Activated CD4-positive, alpha-beta T cell treated with anti-CD3 and anti-CD28 coated beads for 36 hours (primary cell): ENCODE measurements at regions of chr1 and their contacts with region 1.

Region 1: GRCh38 chr1:181142096-181142958 is 53.8 kb downstream of the IER5 start:
- DNase-seq: peak; percentile 95
- ATAC-seq: peak; percentile 73
- H3K4me3 Mint-ChIP-seq: peak overlapping the region; percentile 33
- H3K27ac Mint-ChIP-seq: peak overlapping the region; percentile 85
- H3K4me1 Mint-ChIP-seq: peaks cover 46% of the 10 kb centered on the region
- H3K27me3 Mint-ChIP-seq: peaks cover 3% of the 10 kb centered on the region

Region 2: DNA sequence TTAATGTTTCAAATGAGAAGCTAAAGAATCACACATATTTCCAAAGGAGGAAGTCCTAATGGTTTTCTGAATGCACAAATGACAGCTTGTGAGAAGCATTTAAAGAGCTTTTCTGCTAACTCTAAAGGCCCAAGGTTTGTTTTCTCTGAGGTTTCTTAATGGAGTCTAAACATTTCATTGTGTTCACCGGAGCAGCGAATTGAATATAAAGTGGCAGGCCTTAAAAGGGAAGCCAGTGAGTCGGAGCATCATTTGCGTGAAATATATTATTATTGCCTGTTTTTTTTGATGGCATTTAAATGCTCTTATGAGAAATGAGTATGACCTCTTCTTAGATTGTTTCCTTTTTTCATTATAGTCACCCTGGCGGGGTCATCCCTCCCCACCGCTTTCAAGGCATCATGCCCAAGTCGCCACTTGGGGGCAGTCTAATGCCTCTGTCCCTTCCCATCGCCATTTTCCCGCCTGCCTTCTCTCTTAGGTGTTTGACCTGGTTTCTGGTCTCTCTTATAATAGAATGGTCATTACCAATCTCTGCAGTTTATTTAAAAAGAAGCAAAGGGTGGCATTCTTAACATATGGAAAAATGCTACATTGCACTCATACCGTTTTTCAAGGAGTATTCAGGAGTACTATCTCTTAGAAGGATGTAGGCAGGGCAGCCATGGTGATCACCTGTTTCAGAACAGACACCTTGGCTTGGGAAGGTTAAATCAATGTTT is 608.9 kb before region 1 on chr1:
- CTCF ChIA-PET with region 1: no interaction called
- POLR2A ChIA-PET with region 1: no interaction called
- intact Hi-C with region 1: loop called in 1 of 2 experiments (anchors 1 kb)
- DNase-seq: peak; percentile 86
- ATAC-seq: peak; percentile 81
- H3K4me3 Mint-ChIP-seq: no peak overlapping the region
- H3K27ac Mint-ChIP-seq: no peak overlapping the region
- H3K4me1 Mint-ChIP-seq: no peaks in the 10 kb centered on the region
- H3K27me3 Mint-ChIP-seq: peaks cover 4% of the 10 kb centered on the region

Region 3: GRCh38 chr1:180954005-180954800 is 188.1 kb before region 1 on chr1:
- CTCF ChIA-PET with region 1: interaction called, 3 read pairs
- POLR2A ChIA-PET with region 1: interaction called, 3 read pairs
- intact Hi-C with region 1: loop called in 1 of 2 experiments (anchors 10 kb)
- DNase-seq: peak; percentile 77
- ATAC-seq: peak; percentile 92
- H3K4me3 Mint-ChIP-seq: peak overlapping the region; percentile 33
- H3K27ac Mint-ChIP-seq: peak overlapping the region; percentile 31
- H3K4me1 Mint-ChIP-seq: peaks cover 9% of the 10 kb centered on the region
- H3K27me3 Mint-ChIP-seq: no peaks in the 10 kb centered on the region

Region 4: DNA sequence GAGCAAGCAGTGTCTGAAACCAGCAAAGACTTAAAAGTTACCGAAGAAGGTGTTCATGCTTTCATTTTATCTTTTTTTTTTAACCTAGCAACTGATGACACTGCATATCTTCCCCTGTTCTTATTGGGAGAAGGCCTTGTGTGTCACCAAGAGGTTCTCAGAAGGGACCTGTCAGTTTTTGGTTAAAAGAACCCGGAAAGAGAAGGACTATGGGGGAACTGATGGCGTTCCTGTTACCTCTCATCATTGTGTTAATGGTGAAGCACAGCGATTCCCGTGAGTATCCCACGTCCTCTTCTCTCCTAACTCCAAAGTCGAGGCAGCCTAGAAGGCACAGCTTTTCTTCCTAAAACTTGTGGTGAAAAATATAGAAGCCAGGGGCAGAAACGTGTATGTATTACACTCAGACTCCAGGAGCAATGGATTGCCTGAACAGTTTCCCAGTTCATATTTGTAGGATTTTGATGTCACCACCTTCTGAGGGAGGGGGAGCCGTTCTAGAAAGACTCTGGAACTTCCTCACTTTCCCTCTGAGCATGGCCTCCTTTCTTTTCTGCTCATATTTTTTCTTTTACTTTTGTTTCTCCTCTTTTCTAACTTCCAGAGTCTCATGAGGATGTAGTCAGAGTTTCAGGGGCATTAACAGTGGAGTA is 108.4 kb before region 1 on chr1 and contains the start of gene MR1:
- CTCF ChIA-PET with region 1: interaction called, 155 read pairs
- POLR2A ChIA-PET with region 1: interaction called, 3 read pairs
- intact Hi-C with region 1: loop called (anchors 1 kb)
- DNase-seq: peak; percentile 37
- ATAC-seq: peak; percentile 95
- H3K4me3 Mint-ChIP-seq: peak within 1 kb of the TSS; percentile 81
- H3K27ac Mint-ChIP-seq: peak within 1 kb of the TSS; percentile 100
- H3K4me1 Mint-ChIP-seq: peaks cover 55% of the 10 kb centered on the region
- H3K27me3 Mint-ChIP-seq: no peaks in the 10 kb centered on the region
- total RNA-seq, gene MR1: 21.5 to 25.3 TPM

Region 5: DNA sequence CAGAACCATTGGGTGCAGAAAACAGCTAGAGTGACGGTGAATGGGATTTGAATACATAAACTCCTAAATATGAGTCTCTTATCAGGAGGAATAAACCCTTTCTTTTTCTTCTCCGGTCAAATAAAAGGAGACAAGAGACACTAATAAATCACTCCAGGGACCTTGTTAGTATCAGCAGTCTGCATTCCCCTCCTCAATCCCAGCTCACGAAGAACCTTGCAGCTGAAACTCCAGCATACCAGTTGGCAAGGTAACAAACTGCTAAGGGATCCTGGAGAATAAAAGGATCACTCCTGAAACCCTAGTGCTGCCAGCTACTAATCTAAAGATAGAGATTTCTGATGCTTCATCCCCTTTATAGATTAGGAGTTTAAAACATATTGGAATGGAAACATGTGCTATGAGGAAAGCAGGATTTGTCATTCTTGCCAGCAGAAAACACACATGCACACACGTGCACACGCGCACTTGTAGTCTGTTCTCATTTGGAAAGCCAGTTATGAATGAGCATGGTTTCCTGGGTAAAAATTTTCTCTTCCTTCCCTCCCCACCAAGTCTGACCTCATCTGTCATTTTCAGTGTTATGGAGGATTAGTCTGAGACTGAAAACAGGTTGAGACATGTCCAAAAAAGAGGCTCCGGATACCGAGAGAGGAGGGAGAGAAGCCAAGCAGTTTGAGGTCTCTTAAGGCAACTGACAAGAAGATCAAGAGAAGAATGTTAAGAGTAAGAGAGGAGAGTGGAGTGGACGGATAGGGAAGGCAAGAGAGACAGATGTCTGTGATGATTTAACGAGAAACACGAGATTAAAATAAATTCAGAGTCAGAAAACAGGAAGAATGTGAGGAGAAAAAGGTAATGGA is 42.9 kb before region 1 on chr1:
- CTCF ChIA-PET with region 1: interaction called, 156 read pairs
- POLR2A ChIA-PET with region 1: interaction called, 15 read pairs
- intact Hi-C with region 1: loop called (anchors 1 kb)
- DNase-seq: peak; percentile 73
- ATAC-seq: peak; percentile 87
- H3K4me3 Mint-ChIP-seq: peak overlapping the region; percentile 56
- H3K27ac Mint-ChIP-seq: peak overlapping the region; percentile 94
- H3K4me1 Mint-ChIP-seq: peaks cover 77% of the 10 kb centered on the region
- H3K27me3 Mint-ChIP-seq: no peaks in the 10 kb centered on the region

Region 6: DNA sequence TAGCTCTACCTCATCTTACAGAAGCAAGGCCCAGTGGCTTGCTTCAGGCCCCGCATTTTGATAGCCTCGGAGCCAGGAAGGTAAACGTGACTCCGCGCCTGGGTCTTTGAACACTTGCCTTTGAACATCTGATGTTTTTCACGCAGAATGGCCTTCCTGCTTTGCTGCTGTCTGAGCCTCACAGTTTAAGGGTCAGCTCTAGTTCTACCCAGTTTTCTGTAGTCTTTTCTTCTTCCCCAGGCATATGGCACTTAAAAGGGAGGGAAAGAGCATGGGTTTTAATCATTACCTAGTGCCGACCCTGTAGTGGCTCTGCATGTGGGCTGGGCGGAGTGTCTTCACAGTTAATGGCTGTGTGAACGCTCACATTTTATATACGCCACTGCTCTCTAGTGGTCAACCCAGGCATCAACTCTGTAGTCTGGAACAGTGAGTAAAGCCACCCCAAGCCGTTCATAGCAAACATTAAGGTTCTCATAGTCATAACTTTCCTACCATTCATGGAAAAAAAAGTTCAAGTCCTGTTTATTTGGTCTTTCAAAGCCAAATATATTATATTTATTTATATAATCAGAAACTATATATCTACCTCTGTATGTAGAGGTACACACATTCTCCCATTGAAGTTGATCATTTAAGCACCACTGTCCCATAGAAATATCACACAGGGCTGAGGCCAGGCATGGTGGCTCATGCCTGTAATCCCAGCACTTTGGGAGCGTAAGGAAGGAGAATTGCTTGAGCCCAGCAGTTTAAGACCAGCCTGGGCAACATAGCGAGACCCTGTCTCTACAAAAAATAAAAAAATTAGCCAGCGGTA is 24.3 kb after region 1 on chr1:
- CTCF ChIA-PET with region 1: interaction called, 39 read pairs
- POLR2A ChIA-PET with region 1: no interaction called
- intact Hi-C with region 1: loop called in 1 of 2 experiments (anchors 1 kb)
- DNase-seq: peak; percentile 84
- ATAC-seq: peak; percentile 100
- H3K4me3 Mint-ChIP-seq: no peak overlapping the region
- H3K27ac Mint-ChIP-seq: peak overlapping the region; percentile 68
- H3K4me1 Mint-ChIP-seq: peaks cover 4% of the 10 kb centered on the region
- H3K27me3 Mint-ChIP-seq: no peaks in the 10 kb centered on the region